ENCODE measurements at regions of chr21 and their contacts with region 1.

Region 1: DNA sequence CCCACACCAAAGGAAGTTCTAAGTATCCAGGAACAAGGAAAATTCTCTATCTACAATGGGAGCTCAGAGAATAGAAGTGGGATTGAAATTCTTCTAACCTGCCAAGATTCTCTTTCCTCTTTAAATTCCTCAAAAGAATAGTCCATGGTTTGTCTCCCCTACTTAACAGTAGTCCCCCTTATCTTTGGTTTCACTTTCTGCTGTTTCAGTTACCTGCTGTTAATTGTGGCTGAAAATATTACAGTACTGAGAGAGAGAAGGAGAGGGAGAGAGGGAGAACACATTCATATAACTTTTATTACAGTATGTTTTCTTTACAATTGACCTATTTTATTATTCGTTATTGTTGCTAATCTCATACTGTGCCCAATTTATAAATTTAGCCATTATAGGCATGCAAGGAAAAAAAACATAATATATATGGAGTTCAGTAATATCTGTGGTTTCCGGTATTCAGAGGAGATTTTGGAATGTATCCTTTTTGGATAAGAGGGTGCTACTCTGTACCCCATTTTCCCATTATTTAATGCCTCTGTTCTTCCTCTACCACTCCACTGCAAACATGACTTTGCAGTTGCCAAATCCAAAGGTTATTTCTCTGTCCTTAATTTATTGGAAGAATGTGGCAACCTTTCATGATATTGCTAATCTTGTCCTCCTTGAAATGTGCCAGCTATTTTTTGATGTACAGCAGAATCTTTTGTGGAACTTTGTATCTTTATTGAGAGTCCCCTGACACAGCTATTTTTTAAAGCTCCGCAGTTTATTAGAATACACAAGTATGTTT is 68.0 kb downstream of the USP25 start:
- DNase-seq: peak in 1 of 9 experiments; percentile 14
- ATAC-seq: no peak
- H3K4me3 ChIP-seq: no peak overlapping the region
- H3K4me3 Mint-ChIP-seq: no peak overlapping the region
- H3K27ac ChIP-seq: no peak overlapping the region
- H3K27ac Mint-ChIP-seq: peak overlapping the region; percentile 70
- H3K4me1 ChIP-seq: peaks cover 4% of the 10 kb centered on the region
- H3K4me1 Mint-ChIP-seq: peaks cover 65% of the 10 kb centered on the region
- H3K27me3 ChIP-seq: no peaks in the 10 kb centered on the region
- H3K27me3 Mint-ChIP-seq: no peaks in the 10 kb centered on the region
- CTCF ChIP-seq: no peak

Region 2: DNA sequence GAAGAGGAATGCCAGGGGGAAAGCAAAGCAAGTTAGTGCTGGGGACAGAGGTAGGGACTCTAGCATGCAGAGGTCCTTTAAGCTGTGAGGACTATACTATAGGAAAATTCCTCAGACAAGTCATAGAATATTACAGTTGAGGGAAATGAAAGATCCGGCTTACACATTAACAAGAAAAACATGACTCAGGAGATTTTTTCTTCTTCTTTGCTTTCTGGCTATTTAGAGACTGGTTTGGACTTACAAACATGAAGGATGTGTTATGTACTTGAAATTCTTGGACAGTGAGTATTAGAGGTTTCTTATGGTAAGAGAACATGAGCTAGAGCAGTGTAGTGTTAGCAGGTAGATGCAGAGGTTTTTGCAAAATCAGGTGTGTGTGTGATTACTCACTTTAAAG is 43.1 kb before region 1 on chr21:
- CTCF ChIA-PET with region 1: no interaction called
- POLR2A ChIA-PET with region 1: no interaction called
- intact Hi-C with region 1: loop called in 1 of 2 experiments (anchors 5 kb)
- DNase-seq: no peak
- ATAC-seq: no peak
- H3K4me3 ChIP-seq: no peak overlapping the region
- H3K4me3 Mint-ChIP-seq: no peak overlapping the region
- H3K27ac ChIP-seq: no peak overlapping the region
- H3K27ac Mint-ChIP-seq: no peak overlapping the region
- H3K4me1 ChIP-seq: peaks cover 55% of the 10 kb centered on the region
- H3K4me1 Mint-ChIP-seq: peaks cover 86% of the 10 kb centered on the region
- H3K27me3 ChIP-seq: no peaks in the 10 kb centered on the region
- H3K27me3 Mint-ChIP-seq: no peaks in the 10 kb centered on the region
- CTCF ChIP-seq: no peak

Region 3: DNA sequence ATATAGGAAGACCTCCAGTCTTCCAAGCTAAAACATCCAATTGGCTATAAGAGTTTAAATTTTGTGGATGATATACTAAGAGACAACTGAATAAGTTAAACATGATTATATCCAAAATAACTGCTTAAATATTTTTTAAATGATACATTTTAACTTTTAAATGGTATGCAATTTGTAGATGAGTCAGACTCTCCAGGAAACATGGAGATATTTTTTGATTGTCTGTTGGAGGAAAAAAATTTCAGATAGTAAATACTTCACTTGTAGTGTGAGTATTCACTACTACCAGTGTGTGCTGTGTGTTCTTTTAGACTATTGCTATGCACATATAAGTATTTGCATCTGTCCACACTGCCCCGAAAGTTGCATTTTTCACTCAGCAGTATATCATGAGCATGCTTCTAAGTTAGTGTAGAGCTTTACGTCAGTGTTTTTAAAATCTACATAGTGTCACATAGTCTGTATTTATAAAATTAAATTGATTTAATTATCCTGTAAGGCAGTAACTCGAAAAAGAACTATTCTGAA is 23.1 kb after region 1 on chr21:
- CTCF ChIA-PET with region 1: no interaction called
- POLR2A ChIA-PET with region 1: no interaction called
- intact Hi-C with region 1: no loop called
- DNase-seq: no peak
- ATAC-seq: no peak
- H3K4me3 ChIP-seq: no peak overlapping the region
- H3K4me3 Mint-ChIP-seq: no peak overlapping the region
- H3K27ac ChIP-seq: no peak overlapping the region
- H3K27ac Mint-ChIP-seq: no peak overlapping the region
- H3K4me1 ChIP-seq: peaks cover 26% of the 10 kb centered on the region
- H3K4me1 Mint-ChIP-seq: peaks cover 46% of the 10 kb centered on the region
- H3K27me3 ChIP-seq: no peaks in the 10 kb centered on the region
- H3K27me3 Mint-ChIP-seq: no peaks in the 10 kb centered on the region
- CTCF ChIP-seq: no peak

Measured in CD8-positive, alpha-beta T cell (primary cell).